ENCODE measurements at regions of chr1 and their contacts with region 1.

Region 1: DNA sequence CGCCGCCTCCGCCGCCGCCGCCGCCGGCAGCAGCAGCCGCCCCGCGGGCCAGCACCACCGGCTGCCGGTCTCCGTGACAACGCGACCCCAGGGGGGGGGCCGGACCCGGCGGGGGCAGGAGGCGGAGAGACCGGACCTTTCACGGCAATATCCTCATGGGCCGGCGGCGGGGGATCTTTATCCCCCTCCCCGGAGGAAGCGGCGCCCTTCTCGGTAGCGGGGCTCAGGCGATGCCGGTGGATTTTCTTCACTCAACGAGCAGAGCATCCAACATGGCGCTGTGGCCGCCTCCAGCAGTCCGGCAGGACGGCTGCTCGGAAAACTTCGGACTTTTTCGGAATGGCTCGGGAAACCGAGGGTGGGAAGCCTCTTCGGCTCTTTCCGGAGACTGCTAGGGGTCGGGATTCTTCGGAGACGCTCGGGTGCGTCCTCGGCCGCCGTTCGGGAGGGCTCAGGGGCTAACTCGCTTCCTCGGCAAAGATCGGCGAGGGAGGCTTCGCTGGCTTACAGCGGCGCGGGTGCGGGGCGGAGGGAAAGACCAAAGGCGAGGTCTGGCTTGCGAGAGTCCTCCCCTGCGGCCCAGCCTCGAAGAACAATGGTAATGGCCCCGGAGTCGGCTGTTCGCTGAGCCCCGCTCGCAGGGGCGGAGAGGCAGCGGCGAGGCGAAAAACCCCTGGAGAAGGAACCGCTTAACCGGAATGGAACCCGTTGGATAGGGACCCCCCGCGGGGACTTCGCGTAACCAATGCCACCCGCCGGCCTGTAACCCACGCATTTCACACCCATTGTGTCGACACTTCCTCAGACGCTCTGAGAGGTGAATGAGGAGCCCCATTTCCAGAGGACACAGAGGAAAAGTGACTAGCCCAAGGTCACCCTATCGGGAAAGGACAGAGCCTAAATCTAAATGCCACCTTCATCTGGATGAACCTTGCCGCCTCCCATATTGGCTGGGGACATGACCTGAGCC is at the start of gene EIF4G3:
- DNase-seq: peak; percentile 99
- ATAC-seq: peak; percentile 96 to 97 (median 96)
- H3K4me3 ChIP-seq: peak within 1 kb of the TSS; percentile 60 to 99 (median 90)
- H3K27ac ChIP-seq: peak within 1 kb of the TSS; percentile 71 to 98 (median 92)
- H3K4me1 ChIP-seq: peaks cover 3 to 28% (median 17%) of the 10 kb centered on the region in 12 donors
- H3K27me3 ChIP-seq: no peaks in the 10 kb centered on the region
- CTCF ChIP-seq: no peak
- POLR2A ChIP-seq: peak in 1 of 2 donors; percentile 84
- total RNA-seq, gene EIF4G3: 30.0 to 49.0 (median 37.5) TPM

Region 2: GRCh38 chr1:20786253-20787028 is 390.4 kb before region 1 on chr1:
- intact Hi-C with region 1: loop called in 1 of 10 experiments (anchors 5 kb)
- DNase-seq: peak; percentile 95 to 99 (median 96)
- ATAC-seq: peak; percentile 87 to 97 (median 94)
- H3K4me3 ChIP-seq: peak overlapping the region; percentile 77 to 99 (median 95)
- H3K27ac ChIP-seq: peak overlapping the region; percentile 84 to 100 (median 98)
- H3K4me1 ChIP-seq: peaks cover 4 to 50% (median 30%) of the 10 kb centered on the region in 12 donors
- H3K27me3 ChIP-seq: no peaks in the 10 kb centered on the region
- CTCF ChIP-seq: peak in 1 of 12 donors; percentile 12
- POLR2A ChIP-seq: peak in 1 of 2 donors; percentile 79

Region 3: GRCh38 chr1:21022279-21023040 is 154.4 kb before region 1 on chr1:
- intact Hi-C with region 1: loop called in 1 of 10 experiments (anchors 10 kb)
- DNase-seq: peak in 3 of 5 donors; percentile 39 to 63 (median 43)
- ATAC-seq: peak; percentile 95 to 99 (median 99)
- H3K4me3 ChIP-seq: peak overlapping the region in 6 of 12 donors; percentile 7 to 46 (median 20)
- H3K27ac ChIP-seq: peak overlapping the region; percentile 43 to 92 (median 76)
- H3K4me1 ChIP-seq: peaks cover 5 to 22% (median 18%) of the 10 kb centered on the region in 12 donors
- H3K27me3 ChIP-seq: no peaks in the 10 kb centered on the region
- CTCF ChIP-seq: no peak
- POLR2A ChIP-seq: no peak

Region 4: GRCh38 chr1:21077085-21077484 is 99.8 kb before region 1 on chr1:
- intact Hi-C with region 1: loop called in 1 of 10 experiments (anchors 10 kb)
- DNase-seq: peak in 1 of 5 donors; percentile 35
- ATAC-seq: peak in 2 of 4 donors; percentile 24 to 52
- H3K4me3 ChIP-seq: no peak overlapping the region
- H3K27ac ChIP-seq: peak overlapping the region in 1 of 12 donors; percentile 63
- H3K4me1 ChIP-seq: peaks cover 0 to 37% (median 5%) of the 10 kb centered on the region in 12 donors
- H3K27me3 ChIP-seq: no peaks in the 10 kb centered on the region
- CTCF ChIP-seq: no peak
- POLR2A ChIP-seq: no peak

Region 5: GRCh38 chr1:21261551-21262281 is 84.8 kb after region 1 on chr1:
- intact Hi-C with region 1: no loop called
- DNase-seq: peak; percentile 80 to 95 (median 89)
- ATAC-seq: peak; percentile 77 to 89 (median 88)
- H3K4me3 ChIP-seq: peak overlapping the region in 7 of 12 donors; percentile 6 to 41 (median 26)
- H3K27ac ChIP-seq: peak overlapping the region; percentile 85 to 98 (median 94)
- H3K4me1 ChIP-seq: peaks cover 17 to 66% (median 54%) of the 10 kb centered on the region in 12 donors
- H3K27me3 ChIP-seq: no peaks in the 10 kb centered on the region
- CTCF ChIP-seq: no peak
- POLR2A ChIP-seq: no peak